WTC11 (cell line): ENCODE measurements at regions of chr5 and their contacts with region 1.

Region 1: GRCh38 chr5:137344723-137345322 is 154.3 kb downstream of the SPOCK1 start:
- DNase-seq: peak; percentile 74
- ATAC-seq: peak; percentile 31; the same call in 1 of the 2 replicates
- H3K4me3 Mint-ChIP-seq: no peak overlapping the region
- H3K27ac Mint-ChIP-seq: no peak overlapping the region
- H3K4me1 Mint-ChIP-seq: peaks cover 40% of the 10 kb centered on the region
- H3K27me3 Mint-ChIP-seq: no peaks in the 10 kb centered on the region
- CTCF ChIP-seq: peak; percentile 82

Region 2: GRCh38 chr5:137223324-137224295 is 121.2 kb before region 1 on chr5:
- CTCF ChIA-PET with region 1: no interaction called
- POLR2A ChIA-PET with region 1: no interaction called
- DNase-seq: no peak
- ATAC-seq: no peak
- H3K4me3 Mint-ChIP-seq: no peak overlapping the region
- H3K27ac Mint-ChIP-seq: no peak overlapping the region
- H3K4me1 Mint-ChIP-seq: no peaks in the 10 kb centered on the region
- H3K27me3 Mint-ChIP-seq: no peaks in the 10 kb centered on the region; the same call in 1 of the 2 replicates
- CTCF ChIP-seq: no peak

Region 3: GRCh38 chr5:137273511-137273910 is 71.3 kb before region 1 on chr5:
- CTCF ChIA-PET with region 1: no interaction called
- POLR2A ChIA-PET with region 1: no interaction called
- DNase-seq: no peak
- ATAC-seq: no peak
- H3K4me3 Mint-ChIP-seq: no peak overlapping the region
- H3K27ac Mint-ChIP-seq: no peak overlapping the region
- H3K4me1 Mint-ChIP-seq: no peaks in the 10 kb centered on the region
- H3K27me3 Mint-ChIP-seq: no peaks in the 10 kb centered on the region
- CTCF ChIP-seq: no peak

Region 4: DNA sequence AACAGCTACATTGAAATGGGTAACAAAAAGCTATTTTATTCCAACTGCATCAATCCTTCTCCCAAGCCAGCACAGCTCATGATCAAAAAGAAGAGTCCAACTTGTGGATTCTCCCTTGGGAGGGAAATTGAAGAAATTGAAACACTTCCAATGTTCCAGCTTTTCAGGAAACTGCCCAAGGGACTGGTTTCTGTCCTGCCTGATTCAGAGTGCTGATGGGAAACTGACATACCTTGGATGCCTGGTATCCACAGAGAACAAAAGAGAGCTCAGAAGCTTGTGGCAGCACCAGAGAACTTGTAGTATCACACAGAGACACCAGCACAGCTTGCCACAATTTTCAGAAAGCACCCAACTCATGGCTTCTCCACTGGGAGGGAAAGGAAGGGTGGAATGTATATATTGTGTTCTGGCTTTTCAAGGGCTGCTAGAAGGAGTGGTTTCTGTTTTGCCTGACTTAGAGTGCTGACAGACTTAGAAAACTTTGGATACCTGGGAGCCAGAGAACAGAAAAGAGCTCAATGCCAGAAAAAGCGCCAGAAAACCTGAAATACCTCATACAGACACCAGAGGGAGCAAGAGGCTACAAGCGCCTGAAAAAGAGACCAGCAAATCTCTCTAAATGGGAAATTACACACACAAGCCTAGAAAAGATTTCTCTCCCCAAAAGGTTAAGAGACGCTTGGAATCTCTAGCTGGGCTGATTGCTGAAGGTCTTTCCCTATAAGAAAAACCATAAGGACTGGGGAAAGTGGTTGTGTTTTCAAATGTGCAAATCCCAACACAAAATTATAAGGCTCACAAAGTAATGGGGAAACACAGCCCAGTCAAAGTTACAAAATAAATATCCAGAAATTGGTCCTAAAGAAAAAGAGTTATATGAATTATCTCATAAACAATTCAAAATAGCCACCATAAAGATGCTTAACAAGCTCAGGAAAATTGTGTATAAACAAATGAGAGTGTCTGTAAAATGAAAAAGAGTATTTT is 24.5 kb before region 1 on chr5:
- CTCF ChIA-PET with region 1: interaction called, 80 read pairs
- POLR2A ChIA-PET with region 1: interaction called, 3 read pairs
- DNase-seq: peak; percentile 36
- ATAC-seq: peak; percentile 95
- H3K4me3 Mint-ChIP-seq: no peak overlapping the region
- H3K27ac Mint-ChIP-seq: peak overlapping the region; percentile 79
- H3K4me1 Mint-ChIP-seq: peaks cover 12% of the 10 kb centered on the region; the same call in 1 of the 2 replicates
- H3K27me3 Mint-ChIP-seq: no peaks in the 10 kb centered on the region
- CTCF ChIP-seq: peak; percentile 77

Region 5: DNA sequence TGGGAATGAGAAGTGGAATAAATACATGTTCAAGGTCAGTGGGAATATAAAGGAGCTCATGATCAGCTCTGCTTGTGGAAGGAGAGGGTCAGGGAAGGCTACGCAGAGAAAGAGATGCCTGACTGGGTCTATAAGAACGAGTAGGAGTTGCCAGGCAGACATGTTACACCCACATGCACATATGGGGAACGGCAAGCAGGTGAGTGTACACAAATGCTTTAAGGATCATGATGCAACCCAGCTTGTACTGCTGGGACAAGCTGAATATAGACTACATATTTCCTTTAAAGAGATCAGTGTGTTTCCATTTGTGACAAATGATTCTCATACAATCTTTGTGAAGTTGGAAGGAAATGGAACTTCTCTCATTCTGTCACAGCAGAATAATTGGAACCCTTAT is 12.6 kb after region 1 on chr5:
- CTCF ChIA-PET with region 1: interaction called, 13 read pairs
- POLR2A ChIA-PET with region 1: no interaction called
- DNase-seq: no peak
- ATAC-seq: no peak
- H3K4me3 Mint-ChIP-seq: no peak overlapping the region
- H3K27ac Mint-ChIP-seq: no peak overlapping the region
- H3K4me1 Mint-ChIP-seq: peaks cover 9% of the 10 kb centered on the region; the same call in 1 of the 2 replicates
- H3K27me3 Mint-ChIP-seq: peaks cover 8% of the 10 kb centered on the region; the same call in 1 of the 2 replicates
- CTCF ChIP-seq: no peak

Region 6: DNA sequence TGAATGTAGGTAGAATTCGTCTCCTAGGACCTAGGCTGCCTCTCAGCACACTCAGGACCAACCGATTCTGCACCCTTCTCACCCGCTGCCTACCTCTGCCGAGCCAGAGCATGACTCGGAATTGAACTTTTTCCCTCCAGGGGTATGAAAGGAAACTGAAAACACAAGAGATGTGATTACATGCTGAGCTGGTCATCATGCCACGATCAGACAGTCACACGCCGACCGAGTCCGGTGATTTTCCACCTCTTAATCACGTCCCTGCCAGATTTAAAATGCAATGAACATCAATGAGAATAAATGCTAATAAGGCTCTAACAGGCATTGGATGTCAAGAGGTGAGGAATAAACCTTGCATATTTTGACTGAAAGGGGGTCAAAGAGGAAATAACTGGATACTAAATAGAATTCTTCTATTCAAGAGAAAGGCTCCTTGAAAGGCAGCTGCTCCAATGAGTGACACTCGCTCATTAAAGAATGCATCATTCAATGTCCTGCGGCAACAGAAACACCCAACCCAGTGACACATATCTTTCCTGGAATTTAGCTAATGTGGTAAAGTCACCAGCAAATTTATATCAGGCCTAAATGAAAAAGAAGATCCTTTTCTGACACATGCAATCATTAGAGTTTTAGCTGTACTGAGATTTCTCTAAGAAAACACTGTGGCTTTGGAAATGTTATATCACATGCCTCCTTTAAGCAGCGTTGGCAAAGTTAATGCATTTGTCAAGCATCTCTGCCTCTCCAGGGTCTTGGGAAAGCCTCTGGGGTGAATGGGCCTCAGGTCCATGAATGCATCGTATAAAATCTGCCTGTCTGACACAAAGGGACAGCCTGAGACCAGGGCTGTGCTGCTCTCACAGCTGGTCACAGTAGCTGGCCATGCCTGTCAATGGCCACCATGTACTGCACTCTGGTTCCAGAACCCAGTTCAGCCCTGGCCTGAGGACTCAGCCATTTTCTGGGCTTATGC is 25.6 kb after region 1 on chr5:
- CTCF ChIA-PET with region 1: interaction called, 15 read pairs
- POLR2A ChIA-PET with region 1: no interaction called
- DNase-seq: no peak
- ATAC-seq: no peak
- H3K4me3 Mint-ChIP-seq: no peak overlapping the region
- H3K27ac Mint-ChIP-seq: no peak overlapping the region
- H3K4me1 Mint-ChIP-seq: no peaks in the 10 kb centered on the region; the same call in 1 of the 2 replicates
- H3K27me3 Mint-ChIP-seq: no peaks in the 10 kb centered on the region; the same call in 1 of the 2 replicates
- CTCF ChIP-seq: no peak

Region 7: DNA sequence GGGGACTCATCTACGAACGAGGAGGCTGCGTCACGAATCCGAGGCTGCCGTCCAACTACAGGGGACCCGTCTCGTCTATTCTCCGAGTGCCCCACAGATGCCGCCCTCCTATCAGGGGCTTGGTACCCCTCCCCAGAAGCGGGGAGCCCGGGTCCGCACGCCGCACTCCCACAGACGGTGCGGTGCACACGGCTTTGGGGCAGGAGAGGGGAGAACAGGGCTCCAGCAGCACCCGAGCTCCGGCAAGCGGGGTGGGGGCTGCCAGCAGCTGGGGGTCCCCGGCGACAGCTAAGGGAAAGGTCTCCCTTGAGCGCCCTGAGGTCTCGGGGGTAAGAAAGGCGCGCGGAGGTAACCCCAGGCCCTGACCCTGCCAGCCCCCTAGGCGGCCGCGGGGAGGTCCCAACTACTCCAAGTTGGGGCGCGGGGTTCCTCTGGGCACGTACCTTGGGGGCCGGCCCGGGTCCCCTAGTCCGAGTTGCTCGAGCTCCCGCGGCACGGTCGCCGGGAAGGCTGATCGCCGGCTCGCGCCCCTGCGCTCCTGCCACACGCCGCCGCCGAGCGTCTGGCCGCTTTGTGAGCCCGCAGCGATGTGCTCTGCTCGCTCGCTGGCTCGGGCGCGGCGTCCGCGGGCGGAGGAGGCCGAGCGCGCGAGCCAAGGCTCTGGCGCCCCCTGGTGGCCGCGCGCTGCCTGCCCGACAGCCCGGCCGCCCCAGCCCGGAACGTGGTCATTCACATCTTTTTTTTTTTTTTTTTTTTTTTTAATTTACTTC is 154.1 kb after region 1 on chr5 and contains the start of gene SPOCK1:
- CTCF ChIA-PET with region 1: interaction called, 27 read pairs
- POLR2A ChIA-PET with region 1: no interaction called
- DNase-seq: peak; percentile 78
- ATAC-seq: peak; percentile 86
- H3K4me3 Mint-ChIP-seq: peak within 1 kb of the TSS; percentile 70
- H3K27ac Mint-ChIP-seq: no peak within 1 kb of the TSS
- H3K4me1 Mint-ChIP-seq: 0 out of 2 replicates have a peak, but pooled peaks cover 2% of the 10 kb centered on the region
- H3K27me3 Mint-ChIP-seq: peaks cover 36% of the 10 kb centered on the region
- CTCF ChIP-seq: peak; percentile 84
- total RNA-seq, gene SPOCK1: 13.2 to 15.8 TPM (median 15.2 TPM) in 3 replicates